ENCODE measurements at regions of chr20 and their contacts with region 1.

Region 1: DNA sequence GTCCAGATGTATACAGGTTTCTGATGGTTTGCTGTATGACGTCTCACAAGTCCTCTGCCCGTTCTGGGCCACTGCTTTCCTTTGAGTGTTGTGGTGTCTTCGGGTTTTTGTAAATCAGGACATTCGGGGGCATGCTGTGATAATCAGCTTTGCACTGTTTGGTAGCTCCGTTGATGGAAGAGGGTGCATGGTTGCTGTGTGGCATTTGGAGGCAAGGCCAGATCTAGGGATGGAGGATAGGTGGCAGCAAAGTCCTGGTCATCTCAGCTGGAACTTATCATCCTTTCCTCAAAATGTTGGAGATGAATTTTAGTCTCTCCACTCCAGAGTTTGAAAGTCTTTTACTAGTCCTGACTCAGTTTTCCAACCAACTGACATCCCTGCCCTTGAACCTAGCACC is 91.0 kb downstream of the SCP2D1 start:
- DNase-seq: no peak
- ATAC-seq: peak in 2 of 8 donors; percentile 51 to 53
- H3K4me3 ChIP-seq: no peak overlapping the region
- H3K27ac ChIP-seq: no peak overlapping the region
- H3K4me1 ChIP-seq: no peaks in the 10 kb centered on the region
- H3K27me3 ChIP-seq: no peaks in the 10 kb centered on the region
- CTCF ChIP-seq: peak in 7 of 9 donors; percentile 35 to 61 (median 50)

Region 2: GRCh38 chr20:18657575-18657974 is 247.0 kb before region 1 on chr20:
- intact Hi-C with region 1: no loop called
- DNase-seq: no peak
- ATAC-seq: peak in 1 of 8 donors; percentile 44
- H3K4me3 ChIP-seq: no peak overlapping the region
- H3K27ac ChIP-seq: no peak overlapping the region
- H3K4me1 ChIP-seq: peaks cover 0 to 7% (median 0%) of the 10 kb centered on the region in 9 donors
- H3K27me3 ChIP-seq: no peaks in the 10 kb centered on the region
- CTCF ChIP-seq: no peak

Region 3: DNA sequence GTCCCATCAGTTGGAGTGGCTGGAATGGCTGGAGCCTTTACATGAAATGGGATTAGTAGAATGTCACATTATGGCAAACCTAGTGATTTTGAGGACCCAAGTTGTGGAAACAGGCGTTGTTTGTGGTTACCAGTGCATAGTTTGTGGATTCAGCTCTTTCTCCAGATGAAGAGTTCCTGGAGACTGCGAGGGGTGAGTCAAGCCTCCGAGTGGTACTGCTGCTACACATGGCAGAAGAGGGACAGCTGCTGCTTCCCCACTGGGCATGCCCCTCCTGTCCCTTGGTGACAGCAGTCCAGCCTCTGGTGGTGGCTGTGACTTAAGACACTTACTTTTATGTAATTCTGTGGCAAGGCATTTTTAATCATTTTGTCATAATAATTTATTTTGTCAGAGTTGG is 185.2 kb before region 1 on chr20:
- intact Hi-C with region 1: no loop called
- DNase-seq: no peak
- ATAC-seq: no peak
- H3K4me3 ChIP-seq: no peak overlapping the region
- H3K27ac ChIP-seq: no peak overlapping the region
- H3K4me1 ChIP-seq: no peaks in the 10 kb centered on the region
- H3K27me3 ChIP-seq: no peaks in the 10 kb centered on the region
- CTCF ChIP-seq: no peak

Region 4: DNA sequence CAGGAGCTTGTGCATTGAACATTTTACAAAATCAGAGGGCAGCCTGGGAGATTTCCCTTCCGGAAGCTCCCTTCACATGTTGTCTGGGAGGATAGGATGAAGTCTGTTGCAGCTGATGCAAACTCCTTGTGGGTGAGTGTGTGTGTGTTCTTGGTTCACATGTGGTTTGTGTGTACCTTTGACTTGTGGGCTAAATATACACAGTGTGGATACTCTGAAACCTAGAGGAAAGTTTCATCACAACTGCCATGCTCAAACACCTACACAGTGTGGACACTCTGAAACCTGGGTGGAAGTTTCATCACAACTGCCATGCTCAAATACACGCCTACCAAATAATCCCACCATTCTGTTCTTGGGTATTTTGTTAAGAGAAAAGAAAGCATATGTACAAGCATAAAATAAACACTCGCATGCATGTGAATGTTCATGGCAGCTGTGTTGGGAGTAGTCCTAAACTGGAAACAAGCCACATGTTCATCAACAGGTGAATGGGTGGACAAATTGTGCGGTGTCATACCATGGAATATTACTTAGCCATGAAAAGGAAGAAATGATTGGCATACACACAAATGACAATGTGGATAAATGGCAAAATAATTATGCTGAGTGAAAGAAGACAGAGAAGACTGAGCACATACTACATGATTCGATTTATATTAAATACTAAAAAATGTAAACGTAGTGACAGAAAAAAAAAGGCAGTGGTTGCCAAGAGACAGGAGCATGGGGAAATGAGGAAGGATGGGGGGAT is 89.3 kb before region 1 on chr20:
- intact Hi-C with region 1: no loop called
- DNase-seq: no peak
- ATAC-seq: no peak
- H3K4me3 ChIP-seq: no peak overlapping the region
- H3K27ac ChIP-seq: no peak overlapping the region
- H3K4me1 ChIP-seq: no peaks in the 10 kb centered on the region
- H3K27me3 ChIP-seq: no peaks in the 10 kb centered on the region
- CTCF ChIP-seq: no peak

Region 5: DNA sequence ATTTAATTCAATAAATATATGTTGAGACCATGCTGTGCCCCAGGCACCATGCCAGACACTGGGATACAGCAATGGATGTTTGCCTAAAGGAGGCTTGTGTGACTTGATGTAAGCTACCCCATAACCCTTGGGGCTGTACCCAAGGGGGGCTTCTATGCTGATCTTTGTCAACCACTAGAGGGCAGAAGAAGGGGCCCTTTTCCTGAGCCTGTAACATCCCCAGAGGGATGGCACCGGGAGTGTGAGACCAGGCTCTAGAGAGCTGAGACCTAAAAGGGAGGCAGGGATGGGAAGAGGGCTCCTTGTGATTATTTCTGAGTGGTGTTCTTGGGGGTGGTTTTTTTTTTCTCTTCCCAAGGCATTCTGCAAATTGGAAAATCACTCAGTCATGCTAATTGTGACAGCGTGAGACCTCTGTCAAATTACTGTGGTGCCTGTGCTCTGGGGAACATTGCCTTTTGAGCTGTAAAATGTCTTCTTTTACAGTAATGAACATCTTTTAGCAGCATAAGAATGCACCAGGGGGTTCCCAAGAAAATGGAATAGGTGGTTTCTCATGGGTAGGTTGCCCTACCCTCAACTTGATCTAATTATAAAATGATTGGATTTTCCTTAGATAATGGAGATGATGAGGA is 169.1 kb after region 1 on chr20:
- intact Hi-C with region 1: no loop called
- DNase-seq: no peak
- ATAC-seq: no peak
- H3K4me3 ChIP-seq: no peak overlapping the region
- H3K27ac ChIP-seq: no peak overlapping the region
- H3K4me1 ChIP-seq: peaks cover 0 to 8% (median 0%) of the 10 kb centered on the region in 9 donors
- H3K27me3 ChIP-seq: no peaks in the 10 kb centered on the region
- CTCF ChIP-seq: peak in 4 of 9 donors; percentile 21 to 30 (median 26)

Region 6: DNA sequence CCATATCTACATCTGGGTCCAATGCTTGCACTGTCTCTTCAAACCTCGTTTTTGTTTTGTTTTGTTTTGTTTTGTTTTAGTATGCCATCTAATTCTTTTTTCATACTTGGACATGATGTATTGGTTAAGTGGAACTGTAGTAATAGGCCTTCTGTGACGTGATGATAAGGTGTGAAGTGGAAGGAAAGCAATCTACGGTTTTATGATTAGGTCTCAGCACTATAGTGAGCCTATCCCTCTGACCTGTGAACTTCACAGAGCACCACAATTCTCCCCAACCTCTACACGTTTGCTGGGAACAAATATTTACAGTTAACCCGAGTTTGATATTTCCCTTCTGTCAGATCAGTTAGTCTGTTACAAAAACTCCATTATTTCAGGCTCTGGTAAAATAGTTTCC is 288.7 kb after region 1 on chr20:
- intact Hi-C with region 1: loop called in 1 of 10 experiments (anchors 10 kb)
- DNase-seq: no peak
- ATAC-seq: no peak
- H3K4me3 ChIP-seq: no peak overlapping the region
- H3K27ac ChIP-seq: no peak overlapping the region
- H3K4me1 ChIP-seq: no peaks in the 10 kb centered on the region
- H3K27me3 ChIP-seq: peaks cover 0 to 8% (median 0%) of the 10 kb centered on the region in 7 donors
- CTCF ChIP-seq: no peak

Region 7: GRCh38 chr20:19583532-19584175 is 679.0 kb after region 1 on chr20:
- intact Hi-C with region 1: loop called in 5 of 10 experiments (anchors 5 to 10 kb)
- DNase-seq: peak; percentile 54 to 76
- ATAC-seq: peak; percentile 58 to 87 (median 80)
- H3K4me3 ChIP-seq: no peak overlapping the region
- H3K27ac ChIP-seq: no peak overlapping the region
- H3K4me1 ChIP-seq: peaks cover 0 to under 1% (median 0%) of the 10 kb centered on the region in 9 donors
- H3K27me3 ChIP-seq: peaks cover 0 to 24% (median 5%) of the 10 kb centered on the region in 7 donors
- CTCF ChIP-seq: peak; percentile 60 to 87 (median 83)